Breast epithelium (tissue), 4 donors: ENCODE measurements at regions of chr19 and their contacts with region 1.

Region 1: DNA sequence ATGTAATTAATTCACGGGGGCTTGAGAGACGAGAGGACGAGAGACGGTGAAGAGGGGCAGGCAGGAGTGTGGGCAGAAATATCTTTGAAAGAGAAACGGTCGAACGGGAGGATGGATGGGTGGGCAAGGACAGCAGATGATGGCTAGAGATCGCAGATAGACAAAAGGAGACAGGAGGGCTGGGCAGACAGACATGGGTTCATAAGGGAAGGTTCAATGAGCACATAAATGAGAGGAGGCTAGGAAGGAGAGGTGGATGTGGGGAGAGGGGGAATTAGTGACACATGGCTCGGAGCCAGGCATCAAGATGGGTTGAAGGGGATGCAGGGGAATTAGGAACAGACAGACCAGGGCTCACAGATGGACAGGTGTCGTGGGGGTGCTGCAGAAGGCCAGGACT is 1.1 kb downstream of the SYT3 start:
- DNase-seq: no peak
- H3K4me3 ChIP-seq: peak overlapping the region in 2 of 3 donors; percentile 66 to 73
- H3K27ac ChIP-seq: no peak overlapping the region
- H3K4me1 ChIP-seq: no peaks in the 10 kb centered on the region
- H3K27me3 ChIP-seq: peaks cover 3 to 37% of the 10 kb centered on the region in 2 donors
- CTCF ChIP-seq: no peak
- POLR2A ChIP-seq: no peak

Region 2: GRCh38 chr19:50686310-50687032 is 47.9 kb after region 1 on chr19:
- intact Hi-C with region 1: loop called (anchors 1 kb)
- DNase-seq: no peak
- H3K4me3 ChIP-seq: no peak overlapping the region
- H3K27ac ChIP-seq: no peak overlapping the region
- H3K4me1 ChIP-seq: no peaks in the 10 kb centered on the region
- H3K27me3 ChIP-seq: peaks cover 0 to 41% of the 10 kb centered on the region in 2 donors
- CTCF ChIP-seq: no peak
- POLR2A ChIP-seq: no peak

Region 3: DNA sequence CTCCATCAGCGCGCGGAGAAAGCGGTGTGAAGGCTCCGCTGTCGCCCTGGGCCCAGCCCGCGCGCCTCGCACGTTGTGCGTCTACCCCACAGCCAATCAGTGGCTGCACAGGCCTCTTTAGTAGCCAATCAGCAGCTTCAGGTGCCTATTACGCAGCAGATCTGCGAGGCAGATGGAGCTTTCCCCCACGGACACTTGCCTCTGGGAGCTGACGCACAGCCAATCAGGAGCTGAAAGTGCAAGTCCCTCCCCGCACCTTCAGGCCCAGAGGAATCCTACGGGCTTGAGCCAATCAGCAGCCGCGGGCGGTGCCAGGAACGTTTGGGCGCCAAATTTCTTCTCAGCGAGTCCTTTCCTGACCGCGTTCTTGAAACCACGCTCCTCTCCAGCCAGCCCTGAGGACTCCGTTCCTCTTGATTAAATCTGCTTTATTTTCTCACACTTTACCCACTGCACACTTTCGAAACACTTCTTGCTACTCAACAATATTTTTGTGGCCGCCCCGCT is 543.4 kb after region 1 on chr19:
- intact Hi-C with region 1: no loop called
- DNase-seq: no peak
- H3K4me3 ChIP-seq: no peak overlapping the region
- H3K27ac ChIP-seq: no peak overlapping the region
- H3K4me1 ChIP-seq: no peaks in the 10 kb centered on the region
- H3K27me3 ChIP-seq: peaks cover 0 to 36% of the 10 kb centered on the region in 2 donors
- CTCF ChIP-seq: no peak
- POLR2A ChIP-seq: no peak